Left colon (tissue), 2 donors: ENCODE measurements at regions of chr14 and their contacts with region 1.

Region 1: DNA sequence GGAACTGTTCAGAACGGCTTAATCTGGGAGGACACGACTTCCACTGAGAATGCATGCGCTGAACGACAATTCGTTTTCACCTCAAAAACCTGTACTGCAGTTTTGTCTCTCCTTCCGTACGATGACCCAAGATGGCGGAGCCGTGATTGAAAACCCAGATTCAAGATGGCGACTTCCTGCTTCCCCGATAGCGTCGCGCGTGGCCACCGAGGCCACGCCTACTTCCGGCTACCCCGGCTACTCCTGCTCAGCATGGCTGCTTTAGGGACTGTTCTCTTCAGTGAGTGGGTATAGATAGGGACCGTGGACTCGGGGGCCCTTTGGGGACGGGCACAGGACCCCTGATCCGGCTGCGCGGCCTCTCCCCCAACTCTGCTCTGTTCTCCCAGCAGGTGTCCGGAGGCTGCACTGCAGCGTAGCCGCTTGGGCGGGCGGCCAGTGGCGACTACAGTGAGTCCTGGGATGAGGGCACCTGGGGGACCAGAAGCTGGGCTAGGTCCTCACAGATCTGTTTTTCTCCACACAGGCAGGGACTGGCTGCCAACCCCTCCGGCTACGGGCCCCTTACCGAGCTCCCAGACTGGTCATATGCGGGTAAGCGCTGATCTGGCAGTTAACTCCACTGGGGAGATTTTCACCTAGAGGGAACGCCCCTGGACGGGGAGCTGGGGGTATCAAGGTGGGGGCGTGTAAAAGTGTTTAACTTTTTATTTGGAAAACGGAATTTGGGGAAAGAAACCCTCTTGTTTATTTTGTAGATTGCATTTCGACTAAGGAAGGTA is at the start of gene MRPL52:
- DNase-seq: peak; percentile 90 to 93
- ATAC-seq: peak; percentile 98
- total RNA-seq, gene MRPL52: 64.5 to 81.0 TPM

Region 2: GRCh38 chr14:22542360-22542759 is 287.5 kb before region 1 on chr14:
- intact Hi-C with region 1: no loop called
- DNase-seq: no peak
- ATAC-seq: no peak

Region 3: DNA sequence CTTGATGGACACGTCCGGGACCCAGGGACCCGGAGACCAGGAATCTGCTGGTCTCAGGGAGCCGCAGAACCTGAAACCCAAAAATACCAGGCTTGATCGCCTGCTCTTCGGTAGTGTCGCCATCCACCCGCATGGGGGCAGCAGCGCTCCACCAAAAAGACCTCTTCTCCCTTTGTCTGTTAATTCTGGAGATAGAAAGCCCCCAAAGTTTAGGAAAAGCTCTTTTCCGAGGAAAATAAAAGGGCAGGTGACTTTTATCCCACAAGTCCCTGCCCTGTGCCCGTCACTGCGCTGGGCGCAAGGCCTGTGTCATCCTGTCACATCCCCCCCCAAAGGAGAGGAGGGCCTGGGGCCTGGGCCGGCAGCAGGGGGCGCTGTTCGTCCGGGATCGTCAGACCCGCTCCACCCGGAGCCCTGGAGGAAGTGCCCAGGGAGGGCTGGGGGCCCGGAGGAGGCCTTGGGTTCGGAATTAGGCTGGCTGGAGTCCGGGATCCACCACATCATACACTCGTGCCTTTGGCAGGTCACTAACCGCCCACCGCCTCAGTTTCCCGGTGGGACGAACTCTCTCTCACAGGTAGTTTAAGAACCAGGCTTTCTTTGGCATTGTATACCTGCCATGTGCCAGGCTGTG is 272.7 kb before region 1 on chr14:
- intact Hi-C with region 1: loop called in 1 of 2 experiments (anchors 10 kb)
- DNase-seq: peak; percentile 85 to 93
- ATAC-seq: peak; percentile 72

Region 4: GRCh38 chr14:23057757-23058653 is 228.2 kb after region 1 on chr14:
- intact Hi-C with region 1: no loop called
- DNase-seq: peak; percentile 82 to 92
- ATAC-seq: peak; percentile 80

Region 5: GRCh38 chr14:23660290-23661226 is 830.7 kb after region 1 on chr14:
- intact Hi-C with region 1: no loop called
- DNase-seq: no peak
- ATAC-seq: no peak